MCF 10A (cell line): ENCODE measurements at regions of chr5 and their contacts with region 1.

Region 1: DNA sequence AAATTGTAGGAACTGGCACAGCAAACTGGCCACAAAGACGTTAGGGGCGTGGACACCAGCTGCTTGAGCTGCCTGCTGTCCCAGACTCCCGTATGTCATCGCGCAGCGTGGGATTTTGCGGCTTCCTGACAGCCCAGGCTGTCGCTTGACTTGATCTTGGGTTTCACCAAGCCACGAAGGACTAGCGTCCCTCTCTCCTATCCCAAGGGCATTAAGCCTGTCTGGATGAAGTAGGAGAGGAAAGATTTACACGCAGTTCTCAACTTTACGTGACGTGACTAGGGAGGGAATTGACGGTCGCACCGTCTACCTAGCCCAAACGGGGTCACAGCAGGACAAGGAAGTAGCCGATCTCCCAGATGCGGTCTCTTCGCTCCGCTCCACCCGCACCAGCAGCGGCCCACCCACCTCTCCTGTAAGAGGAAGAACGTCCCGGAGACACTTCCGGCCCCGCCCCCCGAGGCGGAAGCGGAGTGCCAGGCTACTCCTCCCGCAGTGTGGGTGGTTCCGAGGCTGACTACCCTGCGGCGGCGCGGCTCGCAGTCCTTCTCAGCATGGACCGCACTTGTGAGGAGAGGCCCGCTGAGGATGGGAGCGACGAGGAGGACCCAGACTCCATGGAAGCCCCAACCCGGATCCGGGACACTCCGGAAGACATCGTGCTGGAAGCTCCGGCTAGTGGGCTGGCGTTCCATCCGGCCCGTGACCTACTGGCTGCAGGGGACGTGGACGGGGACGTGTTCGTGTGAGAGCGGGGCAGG is at the start of gene WDR55:
- DNase-seq: peak; percentile 98
- H3K4me3 Mint-ChIP-seq: peak within 1 kb of the TSS; percentile 100
- H3K27ac Mint-ChIP-seq: peak within 1 kb of the TSS; percentile 98
- H3K4me1 Mint-ChIP-seq: peaks cover 32% of the 10 kb centered on the region
- H3K27me3 Mint-ChIP-seq: no peaks in the 10 kb centered on the region
- CTCF ChIP-seq: no peak
- total RNA-seq, gene WDR55: 35.0 and 36.4 TPM in 2 replicates

Region 2: GRCh38 chr5:140547508-140548299 is 116.8 kb before region 1 on chr5 and contains the start of gene EIF4EBP3:
- CTCF ChIA-PET with region 1: interaction called, 4 read pairs
- POLR2A ChIA-PET with region 1: interaction called, 16 read pairs
- intact Hi-C with region 1: no loop called
- DNase-seq: peak; percentile 97
- H3K4me3 Mint-ChIP-seq: peak within 1 kb of the TSS; percentile 77
- H3K27ac Mint-ChIP-seq: peak within 1 kb of the TSS; percentile 80
- H3K4me1 Mint-ChIP-seq: peaks cover 27% of the 10 kb centered on the region
- H3K27me3 Mint-ChIP-seq: no peaks in the 10 kb centered on the region
- CTCF ChIP-seq: peak; percentile 74
- total RNA-seq, gene EIF4EBP3: 25.3 and 35.3 TPM in 2 replicates

Region 3: DNA sequence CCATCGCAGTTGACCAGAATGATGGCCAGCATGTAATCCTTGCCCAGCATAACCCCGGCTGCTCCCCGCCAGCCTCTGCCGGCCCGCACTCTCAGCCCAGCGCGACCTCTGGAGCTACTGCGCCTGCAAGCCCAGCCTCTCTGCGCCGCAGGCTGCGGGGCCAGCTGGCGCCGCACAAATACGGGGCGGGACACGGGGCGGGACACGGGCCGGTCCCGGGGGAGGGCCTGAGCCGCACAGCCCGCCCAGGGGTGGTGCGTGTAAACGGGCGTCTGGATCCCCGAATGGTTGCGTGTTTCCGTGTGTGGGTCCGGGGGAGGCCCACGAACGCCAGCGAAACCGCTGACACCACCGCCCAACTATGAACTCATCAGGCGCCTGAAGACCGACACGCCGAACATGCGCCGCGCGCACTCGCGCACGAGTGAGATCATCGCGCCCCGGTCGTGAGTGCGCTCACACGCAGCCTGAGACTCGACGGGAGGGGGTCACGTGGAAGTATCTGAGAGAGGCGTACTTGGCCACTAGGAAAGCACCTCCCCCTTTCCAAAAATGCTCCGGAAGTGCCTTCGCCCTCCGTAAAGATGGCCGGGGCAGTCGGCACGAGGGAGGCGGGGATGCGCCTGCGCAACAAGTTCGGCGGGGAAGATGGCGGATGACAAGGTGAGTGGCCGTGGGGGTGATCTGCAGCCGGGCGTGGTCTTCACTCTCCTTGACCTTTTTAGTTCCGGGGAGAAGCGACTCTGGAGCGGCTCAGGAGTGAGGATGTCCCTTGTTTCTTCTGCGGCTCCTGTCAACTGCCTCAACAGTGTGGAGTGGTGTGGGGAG is 100.1 kb before region 1 on chr5 and contains the starts of genes APBB3 and SLC35A4:
- CTCF ChIA-PET with region 1: no interaction called
- POLR2A ChIA-PET with region 1: interaction called, 33 read pairs
- intact Hi-C with region 1: no loop called
- DNase-seq: peak; percentile 99
- H3K4me3 Mint-ChIP-seq: peak within 1 kb of the TSS; percentile 84
- H3K27ac Mint-ChIP-seq: peak within 1 kb of the TSS; percentile 95
- H3K4me1 Mint-ChIP-seq: peaks cover 22% of the 10 kb centered on the region
- H3K27me3 Mint-ChIP-seq: no peaks in the 10 kb centered on the region
- CTCF ChIP-seq: no peak
- total RNA-seq, gene APBB3: 22.7 and 28.1 TPM in 2 replicates
- total RNA-seq, gene SLC35A4: 84.0 and 119 TPM in 2 replicates

Region 4: DNA sequence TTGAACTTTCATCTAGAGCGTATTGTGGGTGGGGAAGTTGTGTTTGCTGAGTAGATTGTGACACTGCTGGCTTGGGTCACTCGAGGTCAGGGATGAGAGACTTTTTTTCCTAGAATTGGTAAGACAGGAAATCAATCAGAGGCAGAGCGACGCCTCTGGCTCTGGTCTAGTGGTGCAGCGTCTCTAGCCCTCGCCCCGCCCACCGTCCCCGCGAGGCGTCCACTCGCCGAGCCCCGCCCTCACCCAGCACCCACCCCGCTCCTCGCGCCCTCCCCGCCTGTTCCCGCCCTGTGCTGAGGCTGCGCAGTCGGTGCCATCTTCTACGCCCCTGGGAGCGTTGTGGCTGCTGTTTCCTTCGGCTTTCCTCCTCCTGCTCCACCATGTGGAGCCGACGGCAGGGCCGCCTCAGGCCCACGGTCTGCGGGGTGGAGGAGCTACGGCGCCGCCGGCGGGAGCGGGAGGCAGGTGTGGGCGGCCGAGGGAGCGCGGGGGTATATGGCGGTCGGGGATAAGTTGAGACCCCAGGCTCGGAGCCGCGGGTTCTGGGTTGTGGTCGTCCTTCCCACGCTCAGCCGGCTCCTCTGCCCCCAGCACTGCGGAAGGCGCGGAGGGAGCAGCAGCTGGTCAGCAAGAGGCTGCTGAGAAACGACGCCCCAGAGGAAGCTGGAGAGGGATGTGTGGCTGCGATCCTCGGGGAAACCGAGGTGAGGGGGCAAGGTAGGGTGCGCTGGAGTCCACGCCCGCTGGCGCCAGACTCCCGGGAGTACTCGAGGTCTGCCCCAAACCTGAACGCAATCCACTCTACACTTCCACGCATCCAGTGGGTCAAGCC is 25.2 kb before region 1 on chr5 and contains the start of gene TMCO6:
- CTCF ChIA-PET with region 1: interaction called, 5 read pairs
- POLR2A ChIA-PET with region 1: interaction called, 20 read pairs
- intact Hi-C with region 1: no loop called
- DNase-seq: peak; percentile 99
- H3K4me3 Mint-ChIP-seq: peak within 1 kb of the TSS; percentile 83
- H3K27ac Mint-ChIP-seq: peak within 1 kb of the TSS; percentile 92
- H3K4me1 Mint-ChIP-seq: peaks cover 36% of the 10 kb centered on the region
- H3K27me3 Mint-ChIP-seq: no peaks in the 10 kb centered on the region
- CTCF ChIP-seq: peak; percentile 78
- total RNA-seq, gene TMCO6: 15.7 and 17.2 TPM in 2 replicates

Region 5: DNA sequence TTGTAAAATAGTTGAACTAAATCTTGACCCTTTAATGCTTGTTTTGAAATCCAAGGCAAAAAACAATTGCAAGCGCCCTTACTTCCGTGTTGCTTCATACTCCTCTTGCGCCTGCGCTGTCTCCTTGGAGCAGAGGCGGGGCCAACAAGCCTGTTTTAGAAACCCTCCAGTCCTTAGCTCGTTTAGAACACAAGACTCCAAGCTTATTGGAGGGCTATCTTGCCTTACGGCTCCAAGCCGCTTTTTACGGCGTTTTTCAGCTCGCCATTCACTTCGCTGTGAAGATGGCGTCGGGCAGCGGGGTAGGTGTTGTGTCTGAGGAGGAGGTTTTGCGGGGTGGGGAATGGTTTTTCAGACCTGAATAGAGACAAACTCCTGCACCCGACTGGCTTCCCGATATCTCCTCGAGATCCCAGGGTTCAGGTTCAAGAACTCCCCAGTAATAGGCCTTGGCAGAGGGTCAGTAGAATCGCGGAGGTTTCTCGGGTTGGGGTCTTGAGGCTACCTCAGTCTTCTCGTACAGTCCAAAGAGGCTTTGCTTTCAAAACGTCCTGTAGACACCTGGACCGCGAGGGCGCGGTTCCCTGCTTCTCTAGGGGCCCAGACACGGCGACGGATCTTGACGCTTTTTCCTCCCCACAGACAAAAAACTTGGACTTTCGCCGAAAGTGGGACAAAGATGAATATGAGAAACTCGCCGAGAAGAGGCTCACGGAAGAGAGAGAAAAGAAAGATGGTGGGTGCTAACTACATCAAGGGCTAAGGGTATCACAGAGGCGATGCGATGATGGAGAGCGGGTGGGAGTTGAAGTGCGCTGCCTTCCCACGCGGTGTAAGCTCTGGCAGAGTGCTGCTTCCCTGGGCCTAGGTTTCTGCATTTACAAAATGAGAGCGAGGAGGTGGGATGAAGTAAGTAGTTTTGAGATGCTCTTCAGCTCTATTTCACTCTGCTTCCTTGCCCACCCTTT is 35.9 kb after region 1 on chr5 and contains the start of gene ZMAT2:
- CTCF ChIA-PET with region 1: interaction called, 3 read pairs
- POLR2A ChIA-PET with region 1: interaction called, 17 read pairs
- intact Hi-C with region 1: no loop called
- DNase-seq: peak; percentile 100
- H3K4me3 Mint-ChIP-seq: peak within 1 kb of the TSS; percentile 87
- H3K27ac Mint-ChIP-seq: peak within 1 kb of the TSS; percentile 98
- H3K4me1 Mint-ChIP-seq: peaks cover 13% of the 10 kb centered on the region
- H3K27me3 Mint-ChIP-seq: no peaks in the 10 kb centered on the region
- CTCF ChIP-seq: no peak
- total RNA-seq, gene ZMAT2: 54.9 and 70.4 TPM in 2 replicates

Region 6: GRCh38 chr5:140718241-140718580 is 53.7 kb after region 1 on chr5:
- CTCF ChIA-PET with region 1: no interaction called
- POLR2A ChIA-PET with region 1: interaction called, 11 read pairs
- intact Hi-C with region 1: loop called (anchors 1 kb)
- DNase-seq: no peak
- H3K4me3 Mint-ChIP-seq: peak overlapping the region; percentile 73
- H3K27ac Mint-ChIP-seq: peak overlapping the region; percentile 86
- H3K4me1 Mint-ChIP-seq: peaks cover 24% of the 10 kb centered on the region
- H3K27me3 Mint-ChIP-seq: no peaks in the 10 kb centered on the region
- CTCF ChIP-seq: no peak